Activated B cell treated with CpG ODN at 0.5 μM for 24 hours (primary cell): ENCODE measurements at regions of chr11 and their contacts with region 1.

Region 1: DNA sequence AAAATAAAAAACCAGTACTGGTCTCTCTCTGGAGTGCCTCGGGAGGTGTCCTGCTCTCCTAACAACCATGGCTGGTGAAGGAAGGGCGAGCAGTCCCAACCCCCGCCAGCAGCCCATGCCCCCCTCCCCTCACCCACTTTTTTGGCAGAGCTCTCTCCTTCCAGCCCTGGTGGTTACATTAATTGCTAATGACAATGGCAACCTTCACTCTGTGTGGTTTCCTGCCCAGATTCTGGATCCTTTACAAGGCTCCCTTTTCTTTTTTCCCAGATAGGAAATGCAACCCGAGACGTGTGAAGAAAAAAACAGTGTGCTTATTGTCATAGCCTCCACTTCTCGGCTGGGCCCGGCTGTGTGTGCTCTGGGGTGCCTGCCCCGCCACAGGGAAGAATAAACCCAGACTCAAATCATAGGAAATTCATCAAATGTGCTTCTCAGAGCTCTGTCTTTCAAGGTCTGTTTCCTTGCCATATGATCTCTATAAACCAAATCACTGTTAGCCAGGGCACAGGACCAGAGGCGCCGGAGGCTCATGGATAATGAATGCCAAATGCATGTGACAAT is 513.0 kb downstream of the SOX6 start:
- DNase-seq: no peak
- ATAC-seq: no peak
- H3K4me3 Mint-ChIP-seq: no peak overlapping the region
- H3K27ac Mint-ChIP-seq: no peak overlapping the region
- H3K4me1 Mint-ChIP-seq: no peaks in the 10 kb centered on the region
- H3K27me3 Mint-ChIP-seq: no peaks in the 10 kb centered on the region
- CTCF ChIP-seq: no peak

Region 2: GRCh38 chr11:15874704-15875103 is 31.3 kb after region 1 on chr11:
- CTCF ChIA-PET with region 1: no interaction called
- POLR2A ChIA-PET with region 1: no interaction called
- intact Hi-C with region 1: loop called (anchors 1 kb)
- DNase-seq: no peak
- ATAC-seq: no peak
- H3K4me3 Mint-ChIP-seq: no peak overlapping the region
- H3K27ac Mint-ChIP-seq: no peak overlapping the region
- H3K4me1 Mint-ChIP-seq: no peaks in the 10 kb centered on the region
- H3K27me3 Mint-ChIP-seq: no peaks in the 10 kb centered on the region
- CTCF ChIP-seq: no peak